Right ventricle myocardium superior (tissue), 1 donor: ENCODE measurements at regions of chr6 and their contacts with region 1.

Region 1: GRCh38 chr6:82247634-82248232 is at the start of gene IBTK:
- DNase-seq: peak; percentile 96
- ATAC-seq: peak; percentile 99
- total RNA-seq, gene IBTK: 25.6 TPM

Region 2: GRCh38 chr6:83057705-83058321 is 810.1 kb after region 1 on chr6:
- intact Hi-C with region 1: loop called (anchors 5 kb)
- DNase-seq: no peak
- ATAC-seq: peak; percentile 75

Region 3: DNA sequence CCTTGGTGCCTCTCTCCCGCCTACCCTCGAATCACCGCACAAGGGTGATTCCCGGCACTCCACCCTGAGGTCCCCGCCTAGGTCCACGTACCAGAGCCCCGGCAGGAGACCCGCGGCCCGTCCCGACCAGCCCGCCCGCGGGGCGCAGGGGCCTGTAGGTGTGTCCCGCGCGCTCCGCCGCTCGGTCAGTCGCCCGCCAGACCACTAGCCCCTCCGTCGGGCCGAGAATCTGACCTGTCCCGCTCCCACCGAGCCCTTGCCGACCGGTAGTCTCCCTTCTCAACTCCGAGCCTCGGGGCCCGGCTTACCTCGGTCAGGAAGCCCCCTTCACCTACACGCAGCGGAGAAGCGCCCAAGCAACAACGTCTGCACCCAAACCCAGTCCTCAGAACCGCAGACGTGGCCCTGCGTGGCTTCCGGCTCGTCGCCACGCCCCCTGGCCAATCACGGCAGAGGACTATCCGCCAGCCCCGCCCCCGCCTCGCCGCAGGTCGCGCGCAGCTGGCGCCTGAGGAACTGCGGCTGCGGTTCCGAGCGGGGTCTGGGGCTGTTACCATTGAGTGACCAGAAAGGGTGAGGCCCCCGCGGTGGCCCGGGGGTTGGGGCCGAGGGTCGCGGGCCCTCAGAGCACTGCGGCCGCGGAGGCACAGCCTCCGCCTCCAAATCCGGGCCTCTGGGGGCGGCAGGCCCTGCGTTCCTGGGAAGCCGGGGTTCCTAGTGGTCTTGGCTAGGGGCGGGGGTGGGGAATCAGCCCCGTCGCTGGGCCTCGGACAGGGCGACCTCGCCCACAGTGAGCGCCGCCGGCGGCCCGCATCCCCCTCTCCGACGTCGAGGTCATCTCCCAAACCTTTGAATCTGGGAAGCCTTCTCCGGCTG is 945.4 kb after region 1 on chr6 and contains the starts of genes PGM3 and RWDD2A:
- intact Hi-C with region 1: loop called (anchors 10 kb)
- DNase-seq: peak; percentile 95
- ATAC-seq: peak; percentile 100
- total RNA-seq, gene PGM3: 12.0 TPM
- total RNA-seq, gene RWDD2A: 2.8 TPM